Esophagus muscularis mucosa (tissue), 4 donors: ENCODE measurements at regions of chr6 and their contacts with region 1.

Region 1: DNA sequence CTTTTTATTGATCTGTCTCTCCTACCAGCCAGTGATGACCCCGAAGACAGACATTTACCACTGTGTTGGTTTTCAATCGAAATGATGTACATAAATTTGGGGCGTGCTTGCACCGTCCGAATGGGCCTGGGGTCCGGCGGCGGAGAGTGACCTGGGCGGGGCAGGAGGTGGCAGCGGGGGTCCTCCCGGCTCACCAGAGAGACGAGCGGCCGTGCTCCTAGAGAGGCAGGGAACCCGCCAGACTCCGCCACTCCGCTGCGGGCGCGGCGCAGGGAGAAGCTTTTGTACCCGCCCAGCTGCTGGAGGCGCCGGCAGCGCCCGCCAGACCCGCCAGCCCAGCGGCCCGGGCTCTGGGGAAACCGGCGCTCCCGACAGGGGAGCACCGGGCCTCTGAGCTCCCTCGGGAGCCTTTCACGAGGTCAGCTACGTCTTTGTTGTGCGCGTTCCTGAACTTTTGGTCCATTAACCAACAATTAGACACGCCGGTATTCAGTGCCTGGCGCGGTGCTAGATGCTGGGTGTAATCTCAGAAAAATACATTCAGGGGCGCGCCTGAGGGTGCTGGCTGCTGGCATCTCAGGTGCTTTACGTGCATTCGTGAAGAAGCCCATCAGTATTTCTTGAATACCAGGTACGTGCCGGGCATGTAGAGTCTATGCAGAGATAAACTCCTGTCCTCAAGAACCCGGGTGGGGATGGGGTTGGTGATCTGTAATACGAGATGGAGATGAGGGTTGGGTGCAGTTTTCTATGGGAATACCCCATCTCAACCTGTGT is at the start of gene PGBD1:
- DNase-seq: no peak
- H3K4me3 ChIP-seq: peak within 1 kb of the TSS; percentile 69 to 77 (median 76)
- H3K27ac ChIP-seq: peak within 1 kb of the TSS; percentile 74 to 81 (median 79)
- H3K4me1 ChIP-seq: peaks cover 6 to 17% (median 14%) of the 10 kb centered on the region in 4 donors
- H3K27me3 ChIP-seq: no peaks in the 10 kb centered on the region
- CTCF ChIP-seq: no peak
- EP300 ChIP-seq: no peak
- POLR2A ChIP-seq: no peak
- total RNA-seq, gene PGBD1: 5.8 to 8.7 (median 7.1) TPM

Region 2: GRCh38 chr6:28334286-28335039 is 53.0 kb after region 1 on chr6:
- intact Hi-C with region 1: loop called (anchors 5 kb)
- DNase-seq: no peak
- H3K4me3 ChIP-seq: peak overlapping the region; percentile 70 to 72 (median 72)
- H3K27ac ChIP-seq: peak overlapping the region; percentile 86 to 97 (median 96)
- H3K4me1 ChIP-seq: peaks cover 11 to 35% (median 26%) of the 10 kb centered on the region in 4 donors
- H3K27me3 ChIP-seq: no peaks in the 10 kb centered on the region
- CTCF ChIP-seq: no peak
- EP300 ChIP-seq: no peak
- POLR2A ChIP-seq: no peak

Region 3: GRCh38 chr6:28349344-28349891 is 67.9 kb after region 1 on chr6:
- intact Hi-C with region 1: no loop called
- DNase-seq: no peak
- H3K4me3 ChIP-seq: peak overlapping the region; percentile 75 to 78 (median 76)
- H3K27ac ChIP-seq: peak overlapping the region; percentile 76 to 89 (median 84)
- H3K4me1 ChIP-seq: peaks cover 18 to 31% (median 27%) of the 10 kb centered on the region in 4 donors
- H3K27me3 ChIP-seq: no peaks in the 10 kb centered on the region
- CTCF ChIP-seq: no peak
- EP300 ChIP-seq: no peak
- POLR2A ChIP-seq: no peak